ENCODE measurements at regions of chr14 and their contacts with region 1.

Region 1: DNA sequence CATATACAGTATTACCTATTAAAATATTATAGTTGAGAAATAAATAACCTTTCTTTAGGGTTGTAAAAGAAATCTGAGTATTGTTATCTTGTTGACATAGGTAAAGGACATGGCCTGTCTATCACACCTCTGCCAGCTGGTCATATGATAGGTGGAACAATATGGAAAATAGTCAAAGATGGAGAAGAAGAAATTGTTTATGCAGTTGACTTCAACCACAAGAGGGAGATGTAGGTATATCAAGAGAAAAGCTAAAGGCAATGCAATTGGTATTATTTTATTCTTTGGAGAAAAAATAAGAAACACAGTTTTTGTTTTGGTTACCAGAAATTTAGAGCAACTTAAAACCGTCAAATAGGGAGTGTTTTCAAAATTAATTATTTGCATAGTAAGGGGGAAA is 13.5 kb downstream of the CPSF2 start:
- DNase-seq: no peak
- ATAC-seq: no peak
- H3K4me3 ChIP-seq: no peak overlapping the region
- H3K27ac ChIP-seq: no peak overlapping the region
- H3K4me1 ChIP-seq: peaks cover 0 to 4% of the 10 kb centered on the region in 2 donors
- H3K27me3 ChIP-seq: no peaks in the 10 kb centered on the region
- CTCF ChIP-seq: peak in 3 of 5 experiments; percentile 7 to 29 (median 22)
- POLR2A ChIP-seq: no peak

Region 2: GRCh38 chr14:92217936-92218335 is 82.7 kb after region 1 on chr14:
- in situ Hi-C with region 1: no loop called
- intact Hi-C with region 1: no loop called
- DNase-seq: no peak
- ATAC-seq: no peak
- H3K4me3 ChIP-seq: no peak overlapping the region
- H3K27ac ChIP-seq: no peak overlapping the region
- H3K4me1 ChIP-seq: no peaks in the 10 kb centered on the region
- H3K27me3 ChIP-seq: no peaks in the 10 kb centered on the region
- CTCF ChIP-seq: no peak
- POLR2A ChIP-seq: no peak

Region 3: GRCh38 chr14:92426191-92426590 is 290.9 kb after region 1 on chr14:
- in situ Hi-C with region 1: loop called in 1 of 4 experiments (anchors 25 kb)
- intact Hi-C with region 1: no loop called
- DNase-seq: no peak
- ATAC-seq: no peak
- H3K4me3 ChIP-seq: no peak overlapping the region
- H3K27ac ChIP-seq: no peak overlapping the region
- H3K4me1 ChIP-seq: no peaks in the 10 kb centered on the region
- H3K27me3 ChIP-seq: no peaks in the 10 kb centered on the region
- CTCF ChIP-seq: no peak
- POLR2A ChIP-seq: no peak

Region 4: DNA sequence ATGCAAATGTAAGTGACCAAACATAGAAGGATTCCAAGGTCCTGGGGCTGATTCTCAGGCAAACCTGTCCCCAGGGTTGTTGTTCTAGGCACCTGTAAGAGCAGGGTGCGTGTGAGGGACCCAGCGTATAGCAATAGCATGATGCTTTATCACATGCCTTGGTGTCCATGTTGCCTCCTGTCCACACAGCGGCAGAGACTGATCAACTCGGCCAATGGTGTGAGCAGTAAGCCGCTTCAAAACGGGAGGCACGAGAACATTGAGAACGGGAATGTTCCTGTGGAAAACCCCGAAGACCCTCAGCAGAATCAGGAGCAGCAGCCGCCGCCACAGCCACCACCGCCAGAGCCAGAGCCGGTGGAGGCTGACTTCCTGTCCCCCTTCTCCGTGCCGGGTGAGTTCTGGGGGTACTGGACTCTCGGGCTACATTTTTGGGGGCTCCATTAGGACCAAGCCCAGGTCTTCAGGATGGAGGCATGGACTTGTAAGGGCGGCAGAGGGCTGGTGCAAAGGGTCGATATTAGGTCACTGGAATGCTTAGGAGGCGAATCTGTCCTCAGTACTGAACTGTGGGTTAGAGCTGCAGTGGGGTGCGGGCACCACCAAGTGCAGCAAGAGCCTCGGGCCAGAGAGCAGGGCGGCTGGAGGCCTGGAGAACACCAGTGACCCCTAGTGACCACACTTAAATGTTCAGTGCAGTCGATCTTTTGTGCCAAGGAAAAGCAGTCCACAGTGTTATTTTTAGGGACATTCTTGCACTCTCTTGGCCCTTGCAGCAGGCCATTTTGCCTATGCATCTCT is 321.1 kb after region 1 on chr14:
- in situ Hi-C with region 1: no loop called
- intact Hi-C with region 1: loop called (anchors 10 kb)
- DNase-seq: no peak
- ATAC-seq: peak; percentile 46 to 72
- H3K4me3 ChIP-seq: no peak overlapping the region
- H3K27ac ChIP-seq: no peak overlapping the region
- H3K4me1 ChIP-seq: peaks cover 0 to 9% of the 10 kb centered on the region in 2 donors
- H3K27me3 ChIP-seq: no peaks in the 10 kb centered on the region
- CTCF ChIP-seq: peak in 4 of 5 experiments; percentile 30 to 60 (median 50)
- POLR2A ChIP-seq: no peak

Region 5: GRCh38 chr14:92819011-92819597 is 683.8 kb after region 1 on chr14:
- in situ Hi-C with region 1: loop called in 1 of 4 experiments (anchors 25 kb)
- intact Hi-C with region 1: no loop called
- DNase-seq: no peak
- ATAC-seq: no peak
- H3K4me3 ChIP-seq: no peak overlapping the region
- H3K27ac ChIP-seq: no peak overlapping the region
- H3K4me1 ChIP-seq: no peaks in the 10 kb centered on the region
- H3K27me3 ChIP-seq: no peaks in the 10 kb centered on the region
- CTCF ChIP-seq: no peak
- POLR2A ChIP-seq: no peak

Measured in gastrocnemius medialis (tissue), 4 donors.